Tibial artery (tissue), 4 donors: ENCODE measurements at regions of chr20 and their contacts with region 1.

Region 1: DNA sequence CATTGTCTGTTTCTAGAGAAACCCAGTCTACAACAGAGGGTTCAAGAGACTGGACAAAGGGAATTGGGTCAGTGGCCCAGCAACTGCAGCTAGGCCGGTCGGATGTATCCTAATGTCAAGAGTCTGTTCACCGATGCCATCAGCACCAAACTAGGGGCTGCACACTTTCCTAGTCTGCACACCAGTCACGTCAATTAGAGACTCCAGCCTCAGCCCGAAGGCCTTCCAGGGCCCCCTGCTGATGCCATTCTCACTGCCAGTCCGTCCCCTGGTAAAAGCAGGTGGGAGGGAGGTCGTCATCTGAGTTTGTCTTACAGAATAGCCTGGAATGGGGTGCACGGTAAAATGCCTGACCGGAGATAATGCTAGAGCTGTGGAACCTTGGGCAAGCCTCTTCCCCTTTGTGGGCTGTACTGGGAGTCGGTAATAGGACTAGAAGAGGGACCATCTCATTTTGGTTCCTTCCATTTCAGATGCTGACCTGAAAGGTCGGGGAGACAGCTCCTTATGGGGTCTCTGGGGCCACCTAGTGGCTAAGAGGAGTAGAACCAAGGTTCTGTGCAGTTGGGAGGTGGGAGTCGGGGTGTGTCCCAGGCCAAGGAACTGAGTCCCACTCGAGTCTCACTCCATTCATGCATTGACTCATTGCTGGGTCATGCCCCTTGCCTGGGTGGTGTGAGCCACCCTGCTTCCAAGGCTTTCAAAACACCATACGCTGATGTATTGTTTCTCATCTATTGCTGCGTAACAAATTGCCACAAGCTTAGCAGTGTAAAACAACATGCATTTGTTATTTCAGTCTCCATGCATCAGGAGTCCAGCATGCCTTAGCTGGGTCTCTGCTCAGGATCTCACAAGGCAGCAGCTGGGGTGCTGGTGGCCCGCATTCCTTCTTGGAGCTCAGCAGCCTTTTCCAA is 5.1 kb downstream of the SOX12 start:
- DNase-seq: no peak
- H3K4me3 ChIP-seq: no peak overlapping the region
- H3K27ac ChIP-seq: peak overlapping the region in 1 of 2 donors; percentile 95
- H3K4me1 ChIP-seq: peaks cover 0 to 41% (median 16%) of the 10 kb centered on the region in 4 donors
- H3K27me3 ChIP-seq: no peaks in the 10 kb centered on the region
- CTCF ChIP-seq: peak; percentile 76 to 82

Region 2: DNA sequence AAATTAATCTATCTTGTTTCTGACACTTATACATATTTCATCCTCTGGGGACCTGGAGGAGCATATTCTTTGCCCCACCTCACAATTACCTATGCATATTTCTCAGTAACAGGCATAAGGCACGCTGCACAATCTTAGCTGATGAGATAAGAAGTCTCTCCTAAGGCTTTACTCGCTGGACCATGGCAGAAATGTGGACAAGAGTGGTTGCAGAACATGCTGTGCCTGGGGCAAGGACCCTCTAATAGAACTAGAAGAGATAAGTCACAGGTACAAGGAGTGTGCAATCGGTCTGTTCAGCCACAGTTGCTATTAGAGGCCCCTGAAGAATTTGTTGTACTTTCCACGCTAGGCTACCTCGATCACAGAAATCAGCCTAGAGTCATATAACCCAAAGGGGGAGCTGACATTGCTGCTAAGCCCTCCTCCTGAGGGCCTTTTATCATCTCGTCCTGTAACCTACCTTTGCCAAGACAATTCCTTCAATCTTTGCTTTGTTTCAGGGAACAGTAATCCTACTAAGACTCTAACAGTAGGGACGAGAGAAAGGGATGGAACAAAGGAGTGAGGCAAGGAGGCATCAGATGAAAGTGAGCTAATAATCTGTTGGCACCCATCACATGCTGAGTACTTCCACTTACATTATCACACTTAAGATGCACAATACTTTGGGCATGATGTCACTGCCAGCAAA is 119.5 kb before region 1 on chr20:
- intact Hi-C with region 1: loop called (anchors 5 kb)
- DNase-seq: no peak
- H3K4me3 ChIP-seq: no peak overlapping the region
- H3K27ac ChIP-seq: no peak overlapping the region
- H3K4me1 ChIP-seq: no peaks in the 10 kb centered on the region
- H3K27me3 ChIP-seq: no peaks in the 10 kb centered on the region
- CTCF ChIP-seq: no peak

Region 3: GRCh38 chr20:347640-348484 is 17.4 kb after region 1 on chr20:
- intact Hi-C with region 1: loop called (anchors 1 kb)
- DNase-seq: peak; percentile 87 to 95
- H3K4me3 ChIP-seq: peak overlapping the region; percentile 65 to 90
- H3K27ac ChIP-seq: peak overlapping the region; percentile 91 to 95
- H3K4me1 ChIP-seq: peaks cover 0 to 18% (median 9%) of the 10 kb centered on the region in 4 donors
- H3K27me3 ChIP-seq: no peaks in the 10 kb centered on the region
- CTCF ChIP-seq: no peak

Region 4: GRCh38 chr20:577167-577791 is 246.8 kb after region 1 on chr20:
- intact Hi-C with region 1: no loop called
- DNase-seq: no peak
- H3K4me3 ChIP-seq: no peak overlapping the region
- H3K27ac ChIP-seq: no peak overlapping the region
- H3K4me1 ChIP-seq: peaks cover 0 to 4% (median under 1%) of the 10 kb centered on the region in 4 donors
- H3K27me3 ChIP-seq: peaks cover 0 to 21% of the 10 kb centered on the region in 2 donors
- CTCF ChIP-seq: no peak